ENCODE measurements at regions of chr15 and their contacts with region 1.

Region 1: DNA sequence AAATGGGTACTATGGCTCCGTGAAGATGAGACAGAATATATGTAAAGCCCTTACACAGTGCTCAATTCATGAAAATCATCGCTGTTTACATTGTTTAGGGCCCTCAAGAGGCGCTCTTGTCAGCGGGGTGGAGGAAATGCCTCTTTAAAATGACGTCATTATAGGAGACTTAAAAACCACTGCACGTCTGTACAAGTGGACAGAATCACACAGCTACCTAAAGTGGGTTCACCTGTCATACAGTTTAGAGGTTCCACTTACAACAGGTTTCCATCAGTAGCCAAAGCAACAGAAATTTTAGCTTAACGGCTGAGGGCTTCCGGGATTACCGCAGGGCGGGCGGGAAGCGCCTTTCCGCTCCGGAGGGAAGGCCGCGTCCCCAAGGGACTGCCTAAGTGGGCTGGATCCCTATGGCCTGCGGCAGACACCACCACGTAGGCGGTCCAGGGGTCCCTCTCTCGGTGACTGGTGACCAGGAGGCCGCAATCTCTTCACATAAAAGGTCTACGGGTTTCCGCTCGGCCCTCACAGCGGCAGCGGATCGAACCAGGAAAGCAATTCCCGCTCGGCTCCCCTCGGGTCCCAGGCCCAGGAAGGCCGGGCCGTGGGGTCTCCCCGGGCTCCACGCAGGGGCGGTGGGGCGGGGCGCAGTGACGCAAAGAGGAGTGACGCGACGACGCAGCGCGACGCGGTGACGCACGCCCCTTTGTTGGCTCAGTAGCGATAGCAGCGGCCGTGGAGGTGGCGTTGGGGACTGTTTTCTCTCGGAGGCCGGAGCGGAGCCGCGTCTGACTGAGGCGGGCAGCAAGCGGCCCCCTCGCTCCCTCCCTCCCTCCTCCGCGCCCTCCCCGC is at the start of gene ARIH1:
- DNase-seq: peak; percentile 97 to 99 (median 99)
- H3K4me3 ChIP-seq: peak within 1 kb of the TSS; percentile 88
- H3K27ac ChIP-seq: peak within 1 kb of the TSS; percentile 99 to 100
- H3K4me1 ChIP-seq: peaks cover 11% of the 10 kb centered on the region
- H3K27me3 ChIP-seq: no peaks in the 10 kb centered on the region
- CTCF ChIP-seq: peak in 2 of 3 donors; percentile 7 to 23
- EP300 ChIP-seq: peak; percentile 59
- POLR2A ChIP-seq: peak; percentile 100
- total RNA-seq, gene ARIH1: 47.9 to 211 (median 171) TPM

Region 2: GRCh38 chr15:72117486-72118399 is 356.1 kb before region 1 on chr15 and contains the start of gene MYO9A:
- intact Hi-C with region 1: loop called in 1 of 4 experiments (anchors 5 kb)
- DNase-seq: peak; percentile 98 to 99 (median 98)
- H3K4me3 ChIP-seq: peak within 1 kb of the TSS; percentile 52
- H3K27ac ChIP-seq: peak within 1 kb of the TSS; percentile 77 to 92
- H3K4me1 ChIP-seq: peaks cover 2% of the 10 kb centered on the region
- H3K27me3 ChIP-seq: no peaks in the 10 kb centered on the region
- CTCF ChIP-seq: peak in 2 of 3 donors; percentile 13 to 16
- EP300 ChIP-seq: no peak
- POLR2A ChIP-seq: peak; percentile 29
- total RNA-seq, gene MYO9A: 38.0 to 71.6 (median 58.8) TPM